Activated CD4-positive, alpha-beta memory T cell treated with anti-CD3 and anti-CD28 coated beads, Interleukin-2, amount 10 ng/mL, durations not matched to agents 7 days and 5 days (primary cell): ENCODE measurements at regions of chr1 and their contacts with region 1.

Region 1: GRCh38 chr1:28248283-28249012 is 10.9 kb upstream of the SESN2 start:
- DNase-seq: peak; percentile 87
- H3K4me3 Mint-ChIP-seq: peak overlapping the region; percentile 82
- H3K27ac Mint-ChIP-seq: peak overlapping the region; percentile 96
- H3K4me1 Mint-ChIP-seq: peaks cover 52% of the 10 kb centered on the region
- H3K27me3 Mint-ChIP-seq: no peaks in the 10 kb centered on the region

Region 2: DNA sequence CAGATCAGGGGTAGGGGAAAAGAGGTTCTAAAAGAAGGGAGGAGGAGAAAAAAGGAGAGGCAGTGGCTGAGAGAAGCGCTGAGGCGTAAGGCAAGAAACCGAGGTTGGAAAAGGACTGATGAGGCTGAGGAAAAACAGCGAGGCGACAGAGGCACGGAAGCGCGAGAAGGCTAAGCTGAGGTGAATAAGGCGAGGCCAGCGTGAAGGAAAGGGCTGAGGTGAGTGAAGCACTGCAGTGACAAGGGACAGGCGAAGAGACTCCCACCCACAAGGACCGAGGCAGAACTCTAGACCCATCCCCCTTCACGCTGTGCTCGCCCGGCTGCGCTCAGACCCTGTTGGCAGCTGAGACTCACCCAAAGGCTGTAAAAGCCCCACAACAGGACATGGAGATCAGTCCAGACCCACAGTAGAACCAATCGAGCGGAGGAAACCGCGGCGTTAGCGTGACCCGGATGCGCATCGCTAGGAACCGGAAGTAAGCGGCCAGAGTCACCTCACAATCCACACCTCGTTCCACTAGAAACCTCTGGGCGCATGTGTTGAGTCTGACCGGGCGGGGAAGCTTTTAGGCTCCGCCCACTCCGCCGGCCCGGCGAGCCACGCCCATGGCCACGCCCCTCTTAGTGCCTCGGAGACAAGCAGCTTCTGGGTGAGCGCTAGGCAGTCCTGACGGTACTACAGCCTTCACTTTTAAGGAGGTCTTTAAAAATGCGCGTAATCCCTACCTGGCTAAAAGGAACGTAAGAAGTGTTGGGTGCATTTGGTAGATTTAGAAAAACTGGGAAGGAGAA is 160.1 kb before region 1 on chr1 and contains the start of gene EYA3:
- CTCF ChIA-PET with region 1: interaction called, 8 read pairs
- POLR2A ChIA-PET with region 1: interaction called, 15 read pairs
- DNase-seq: peak; percentile 100
- H3K4me3 Mint-ChIP-seq: peak within 1 kb of the TSS; percentile 99
- H3K27ac Mint-ChIP-seq: peak within 1 kb of the TSS; percentile 97
- H3K4me1 Mint-ChIP-seq: peaks cover 38% of the 10 kb centered on the region
- H3K27me3 Mint-ChIP-seq: peaks cover 6% of the 10 kb centered on the region
- total RNA-seq, gene EYA3: 29.5 to 32.0 TPM

Region 3: DNA sequence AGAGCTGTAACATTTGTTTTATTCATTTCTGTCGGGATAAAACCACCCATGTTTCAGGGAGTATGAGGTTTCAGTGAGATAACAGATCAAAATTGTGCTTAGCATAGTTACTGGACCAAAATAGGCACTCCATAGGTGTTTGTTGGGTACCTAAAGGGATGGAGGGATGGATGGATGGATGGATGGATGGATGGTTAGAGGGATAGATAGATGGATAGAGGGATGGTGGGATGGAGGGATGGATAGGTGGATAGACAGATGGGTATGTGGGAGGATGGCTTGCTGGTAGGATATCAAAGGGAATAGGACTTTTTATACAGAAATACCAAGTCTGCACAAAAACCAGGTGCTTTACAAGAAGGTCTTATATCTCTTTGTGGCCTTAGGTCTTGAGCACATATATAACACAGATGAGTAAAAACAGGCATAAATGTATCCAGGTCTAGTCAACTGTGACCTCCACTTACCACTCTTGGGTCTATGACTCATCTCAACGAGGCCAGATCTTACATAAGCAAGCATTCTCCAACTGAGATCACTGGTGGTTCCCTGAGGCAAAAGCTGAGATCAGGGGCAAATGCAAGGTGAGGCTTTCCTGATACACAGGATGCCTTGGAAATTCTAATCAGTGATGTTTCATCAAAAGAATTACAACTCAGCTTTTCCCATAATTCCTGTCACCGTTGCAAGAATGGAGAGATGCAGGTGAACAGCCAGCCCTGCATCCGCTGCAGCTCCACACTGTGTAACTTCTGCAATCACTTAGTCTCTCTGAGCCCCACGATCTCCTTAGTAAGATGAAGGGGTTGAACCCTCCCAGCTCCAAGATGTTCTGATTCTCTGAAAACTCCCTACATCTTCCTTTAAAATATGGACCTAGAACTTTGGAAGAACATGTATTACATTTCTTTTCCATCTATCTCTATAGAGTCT is 104.0 kb before region 1 on chr1:
- CTCF ChIA-PET with region 1: no interaction called
- POLR2A ChIA-PET with region 1: no interaction called
- DNase-seq: peak; percentile 36
- H3K4me3 Mint-ChIP-seq: no peak overlapping the region
- H3K27ac Mint-ChIP-seq: no peak overlapping the region
- H3K4me1 Mint-ChIP-seq: peaks cover 15% of the 10 kb centered on the region
- H3K27me3 Mint-ChIP-seq: peaks cover 49% of the 10 kb centered on the region

Region 4: DNA sequence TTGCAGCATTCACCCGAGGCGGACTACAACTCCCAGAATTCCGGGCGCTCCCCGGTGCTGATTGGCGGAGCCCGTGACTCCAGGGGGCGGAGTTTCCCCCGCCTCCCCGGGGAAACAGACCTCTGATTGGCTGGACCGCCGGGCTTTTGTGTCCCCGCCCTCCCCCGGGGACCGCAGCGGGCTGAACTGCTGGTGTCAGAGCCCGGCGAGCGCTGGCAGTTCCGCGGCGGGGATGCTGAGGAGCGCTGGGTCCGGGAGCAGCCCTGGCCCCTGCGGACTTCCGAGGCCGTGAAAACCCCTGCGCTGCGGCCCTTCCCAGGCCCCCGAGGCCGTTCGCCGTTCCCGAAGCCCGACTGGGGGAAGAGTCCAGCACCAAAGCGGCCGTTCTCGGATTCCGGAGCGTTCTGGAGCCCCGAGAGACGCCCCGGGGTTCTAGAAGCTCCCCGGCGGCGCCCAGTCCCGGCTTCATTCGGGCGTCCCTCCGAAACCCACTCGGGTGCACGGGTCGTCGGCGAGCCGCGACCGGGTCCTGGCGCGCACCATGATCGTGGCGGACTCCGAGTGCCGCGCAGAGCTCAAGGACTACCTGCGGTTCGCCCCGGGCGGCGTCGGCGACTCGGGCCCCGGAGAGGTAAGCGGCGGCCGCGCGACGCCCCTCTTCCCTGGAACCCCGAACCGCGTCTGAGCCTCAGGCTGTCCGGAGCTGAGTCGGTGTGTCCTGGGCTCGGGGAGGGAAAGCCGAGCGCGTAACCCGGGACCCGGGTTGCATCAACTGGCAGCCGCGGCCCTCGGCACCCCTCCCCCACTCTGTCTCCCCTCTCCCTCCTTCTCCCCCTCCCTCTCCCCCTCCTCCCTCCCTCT is 11.1 kb after region 1 on chr1 and contains the start of gene SESN2:
- CTCF ChIA-PET with region 1: interaction called, 42 read pairs
- POLR2A ChIA-PET with region 1: interaction called, 159 read pairs
- DNase-seq: peak; percentile 100
- H3K4me3 Mint-ChIP-seq: peak within 1 kb of the TSS; percentile 71
- H3K27ac Mint-ChIP-seq: peak within 1 kb of the TSS; percentile 83
- H3K4me1 Mint-ChIP-seq: peaks cover 53% of the 10 kb centered on the region
- H3K27me3 Mint-ChIP-seq: no peaks in the 10 kb centered on the region
- total RNA-seq, gene SESN2: 22.8 to 23.9 TPM

Region 5: DNA sequence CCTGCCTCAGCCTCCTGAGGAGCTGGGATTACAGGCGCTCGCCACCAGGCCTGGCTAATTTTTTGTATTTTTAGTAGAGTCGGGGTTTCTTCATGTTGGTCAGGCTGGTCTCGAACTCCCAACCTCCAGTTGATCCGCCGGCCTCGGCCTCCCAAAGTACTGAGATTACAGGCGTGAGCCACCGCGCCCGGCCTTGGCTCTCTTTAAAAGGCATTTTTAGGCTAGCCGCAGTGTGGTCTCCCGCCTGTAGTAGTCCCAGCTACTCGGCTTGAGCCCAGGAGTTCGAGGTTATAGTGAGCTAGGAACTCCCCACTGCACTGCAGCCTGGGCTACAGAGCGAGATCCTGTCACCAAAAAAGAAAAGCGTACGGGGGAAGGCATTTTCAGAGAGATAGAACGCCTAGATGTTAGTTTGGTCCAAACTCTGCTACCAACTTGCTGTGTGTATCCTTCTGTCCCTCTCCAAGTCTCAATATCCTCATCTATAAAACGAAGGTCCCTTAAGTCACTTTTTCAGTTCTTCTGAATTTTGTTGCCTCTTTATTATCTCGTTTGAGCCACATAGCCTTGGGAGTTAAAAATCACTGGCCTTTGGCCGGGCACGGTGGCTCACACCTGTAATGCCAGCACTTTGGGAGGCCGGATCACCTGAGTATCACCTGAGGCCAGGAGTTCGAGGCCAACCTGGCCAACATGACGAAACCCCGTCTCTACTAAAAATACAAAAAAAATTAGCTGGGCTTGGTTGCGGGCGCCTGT is 81.1 kb after region 1 on chr1:
- CTCF ChIA-PET with region 1: interaction called, 33 read pairs
- POLR2A ChIA-PET with region 1: interaction called, 87 read pairs
- DNase-seq: peak; percentile 61
- H3K4me3 Mint-ChIP-seq: peak overlapping the region; percentile 95
- H3K27ac Mint-ChIP-seq: peak overlapping the region; percentile 97
- H3K4me1 Mint-ChIP-seq: peaks cover 44% of the 10 kb centered on the region
- H3K27me3 Mint-ChIP-seq: no peaks in the 10 kb centered on the region

Region 6: GRCh38 chr1:28359592-28360239 is 111.3 kb after region 1 on chr1:
- CTCF ChIA-PET with region 1: interaction called, 34 read pairs
- POLR2A ChIA-PET with region 1: interaction called, 10 read pairs
- DNase-seq: peak; percentile 79
- H3K4me3 Mint-ChIP-seq: no peak overlapping the region
- H3K27ac Mint-ChIP-seq: no peak overlapping the region
- H3K4me1 Mint-ChIP-seq: peaks cover 7% of the 10 kb centered on the region
- H3K27me3 Mint-ChIP-seq: peaks cover 6% of the 10 kb centered on the region

Region 7: GRCh38 chr1:28412731-28413130 is 164.3 kb after region 1 on chr1:
- CTCF ChIA-PET with region 1: interaction called, 20 read pairs
- POLR2A ChIA-PET with region 1: no interaction called
- DNase-seq: no peak
- H3K4me3 Mint-ChIP-seq: no peak overlapping the region
- H3K27ac Mint-ChIP-seq: no peak overlapping the region
- H3K4me1 Mint-ChIP-seq: peaks cover 11% of the 10 kb centered on the region
- H3K27me3 Mint-ChIP-seq: no peaks in the 10 kb centered on the region

Region 8: GRCh38 chr1:28668191-28668955 is 419.9 kb after region 1 on chr1 and contains the start of gene GMEB1:
- CTCF ChIA-PET with region 1: no interaction called
- POLR2A ChIA-PET with region 1: interaction called, 14 read pairs
- DNase-seq: peak; percentile 89
- H3K4me3 Mint-ChIP-seq: peak within 1 kb of the TSS; percentile 92
- H3K27ac Mint-ChIP-seq: peak within 1 kb of the TSS; percentile 97
- H3K4me1 Mint-ChIP-seq: peaks cover 20% of the 10 kb centered on the region
- H3K27me3 Mint-ChIP-seq: no peaks in the 10 kb centered on the region
- total RNA-seq, gene GMEB1: 27.7 to 28.7 TPM